GM12878 (cell line): ENCODE measurements at regions of chr2 and their contacts with region 1.

Region 1: GRCh38 chr2:97673182-97673914 is 3.8 kb downstream of the C2orf92 start:
- DNase-seq: no peak
- ATAC-seq: no peak
- H3K4me3 ChIP-seq: no peak overlapping the region
- H3K27ac ChIP-seq: peak overlapping the region; percentile 36; the same call in 1 of the 2 replicates
- H3K4me1 ChIP-seq: peaks cover 9% of the 10 kb centered on the region
- H3K27me3 ChIP-seq: no peaks in the 10 kb centered on the region
- CTCF ChIP-seq: no peak
- EP300 ChIP-seq: no peak
- POLR2A ChIP-seq: no peak
- RAD21 ChIP-seq: no peak

Region 2: GRCh38 chr2:97645695-97646629 is 27.4 kb before region 1 on chr2 and contains the start of gene COX5B:
- CTCF ChIA-PET with region 1: no interaction called
- POLR2A ChIA-PET with region 1: interaction called, 12 read pairs
- RAD21 ChIA-PET with region 1: interaction called, 6 read pairs
- SMC1A ChIA-PET with region 1: interaction called, 7 read pairs
- in situ Hi-C with region 1: no loop called
- intact Hi-C with region 1: no loop called
- DNase-seq: peak; percentile 89
- ATAC-seq: peak; percentile 97
- H3K4me3 ChIP-seq: peak within 1 kb of the TSS; percentile 99
- H3K27ac ChIP-seq: peak within 1 kb of the TSS; percentile 81
- H3K4me1 ChIP-seq: no peaks in the 10 kb centered on the region; the same call in 1 of the 2 replicates
- H3K27me3 ChIP-seq: no peaks in the 10 kb centered on the region
- CTCF ChIP-seq: no peak
- EP300 ChIP-seq: no peak
- POLR2A ChIP-seq: peak; percentile 97
- RAD21 ChIP-seq: no peak
- polyA plus RNA-seq, gene COX5B: 150 to 392 TPM

Region 3: GRCh38 chr2:97688062-97688827 is 14.9 kb after region 1 on chr2:
- CTCF ChIA-PET with region 1: interaction called, 5 read pairs
- POLR2A ChIA-PET with region 1: interaction called, 12 read pairs
- RAD21 ChIA-PET with region 1: interaction called, 4 read pairs
- SMC1A ChIA-PET with region 1: interaction called, 7 read pairs
- in situ Hi-C with region 1: no loop called
- intact Hi-C with region 1: no loop called
- DNase-seq: peak; percentile 30
- ATAC-seq: peak; percentile 94
- H3K4me3 ChIP-seq: no peak overlapping the region
- H3K27ac ChIP-seq: no peak overlapping the region
- H3K4me1 ChIP-seq: peaks cover 3% of the 10 kb centered on the region; the same call in 1 of the 2 replicates
- H3K27me3 ChIP-seq: no peaks in the 10 kb centered on the region
- CTCF ChIP-seq: no peak
- EP300 ChIP-seq: no peak
- POLR2A ChIP-seq: no peak
- RAD21 ChIP-seq: no peak